PC-9 (cell line): ENCODE measurements at regions of chrX and their contacts with region 1.

Region 1: DNA sequence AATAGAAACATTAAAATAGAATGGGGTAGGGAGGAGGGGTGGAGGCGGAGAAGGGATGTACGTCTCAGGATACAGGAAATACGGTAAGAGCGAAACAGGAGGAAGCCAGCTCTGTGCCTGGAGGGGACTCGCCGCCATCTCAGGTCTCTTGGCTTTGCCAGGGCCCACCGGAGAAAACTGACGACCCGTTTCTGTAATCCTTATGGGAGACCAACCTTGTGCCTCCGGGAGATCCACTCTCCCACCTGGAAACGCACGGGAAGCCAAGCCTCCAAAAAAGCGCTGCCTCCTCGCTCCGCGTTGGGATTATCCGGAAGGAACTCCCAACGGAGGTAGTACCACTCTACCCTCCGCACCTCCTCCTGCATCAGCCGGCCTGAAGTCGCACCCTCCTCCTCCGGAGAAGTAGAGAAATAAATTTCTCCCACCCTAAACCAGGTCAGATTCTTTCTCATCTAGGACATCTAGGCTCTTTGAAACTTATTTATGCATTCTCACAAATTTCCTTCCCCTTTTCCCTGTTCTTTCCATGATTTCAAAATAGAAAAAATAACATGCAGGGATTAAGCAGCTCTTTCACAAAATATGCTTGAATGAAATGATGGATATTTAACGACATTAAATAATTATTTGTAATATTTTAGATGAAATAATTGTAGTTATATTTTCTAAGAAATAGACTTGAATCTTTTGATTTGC is at the start of gene NBDY:
- DNase-seq: peak in 1 of 2 experiments; percentile 59
- H3K4me3 ChIP-seq: peak within 1 kb of the TSS; percentile 66
- H3K27ac ChIP-seq: peak within 1 kb of the TSS; percentile 43; the same call in 1 of the 2 replicates
- H3K4me1 ChIP-seq: no peaks in the 10 kb centered on the region
- H3K27me3 ChIP-seq: no peaks in the 10 kb centered on the region
- CTCF ChIP-seq: no peak
- total RNA-seq, gene NBDY: 76.6 and 99.3 TPM in 2 replicates

Region 2: DNA sequence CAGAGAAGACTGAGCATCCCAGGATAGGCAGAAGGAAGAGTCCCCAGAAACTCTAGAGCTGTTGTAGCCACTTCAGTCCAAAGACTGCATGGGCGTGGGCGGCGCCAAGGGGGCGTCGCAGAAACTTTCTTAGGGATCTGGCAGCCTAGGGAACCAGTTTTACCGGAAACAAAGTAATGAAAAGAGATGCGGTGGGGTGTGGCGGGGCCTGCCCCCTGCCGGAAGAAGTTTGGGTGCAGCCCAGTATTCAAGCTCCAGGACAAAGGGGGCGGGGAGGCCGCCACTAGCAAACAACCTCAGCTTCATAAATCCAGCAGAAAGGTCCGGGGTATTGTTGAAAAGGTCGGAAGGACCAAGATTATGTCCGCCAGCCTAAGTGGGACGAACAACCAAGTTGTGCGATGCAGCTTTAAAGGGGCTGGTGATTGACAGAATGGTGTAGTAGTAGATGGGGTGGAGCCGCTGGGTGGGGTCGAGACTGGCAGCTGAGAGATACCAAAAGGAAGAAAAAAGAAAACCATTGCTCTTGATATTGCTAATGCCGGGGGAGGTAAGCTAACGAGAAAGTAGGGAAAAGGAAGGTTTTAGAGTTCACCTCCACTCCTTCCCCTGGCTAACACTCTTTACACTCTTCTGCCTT is 821.2 kb before region 1 on chrX:
- CTCF ChIA-PET with region 1: no interaction called
- POLR2A ChIA-PET with region 1: no interaction called
- intact Hi-C with region 1: loop called (anchors 10 kb)
- DNase-seq: peak; percentile 72 to 78
- H3K4me3 ChIP-seq: peak overlapping the region; percentile 84
- H3K27ac ChIP-seq: peak overlapping the region; percentile 69
- H3K4me1 ChIP-seq: peaks cover 14% of the 10 kb centered on the region
- H3K27me3 ChIP-seq: no peaks in the 10 kb centered on the region
- CTCF ChIP-seq: peak; percentile 69

Region 3: GRCh38 chrX:56232221-56233082 is 496.8 kb before region 1 on chrX and contains the start of gene KLF8:
- CTCF ChIA-PET with region 1: interaction called, 4 read pairs
- POLR2A ChIA-PET with region 1: interaction called, 6 read pairs
- intact Hi-C with region 1: loop called (anchors 2 kb)
- DNase-seq: peak; percentile 62 to 84
- H3K4me3 ChIP-seq: peak within 1 kb of the TSS; percentile 83
- H3K27ac ChIP-seq: peak within 1 kb of the TSS; percentile 53; the same call in 1 of the 2 replicates
- H3K4me1 ChIP-seq: peaks cover 37% of the 10 kb centered on the region
- H3K27me3 ChIP-seq: no peaks in the 10 kb centered on the region
- CTCF ChIP-seq: no peak
- total RNA-seq, gene KLF8: 92.7 and 93.2 TPM in 2 replicates

Region 4: DNA sequence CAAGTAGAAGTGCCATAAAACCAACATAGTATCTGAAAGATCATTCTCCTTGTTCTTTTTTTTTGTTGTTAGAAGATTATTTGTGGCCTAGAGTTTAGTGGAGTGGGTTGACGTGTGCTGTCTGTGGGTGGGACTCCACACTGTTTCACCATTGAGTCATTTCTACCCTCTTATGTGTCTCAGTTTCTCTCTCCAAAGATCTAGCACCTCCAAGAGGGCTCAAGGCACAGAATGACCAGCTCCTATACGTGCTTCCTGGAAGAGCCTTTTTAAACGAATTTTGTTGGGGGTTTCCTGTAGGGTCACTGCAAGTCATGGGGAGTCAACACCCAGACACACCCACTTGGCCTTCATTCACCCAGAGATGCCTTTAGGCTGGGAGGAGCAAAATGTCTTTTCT is 347.0 kb before region 1 on chrX:
- CTCF ChIA-PET with region 1: no interaction called
- POLR2A ChIA-PET with region 1: no interaction called
- intact Hi-C with region 1: loop called (anchors 10 kb)
- DNase-seq: no peak
- H3K4me3 ChIP-seq: no peak overlapping the region
- H3K27ac ChIP-seq: no peak overlapping the region
- H3K4me1 ChIP-seq: no peaks in the 10 kb centered on the region
- H3K27me3 ChIP-seq: no peaks in the 10 kb centered on the region
- CTCF ChIP-seq: no peak

Region 5: DNA sequence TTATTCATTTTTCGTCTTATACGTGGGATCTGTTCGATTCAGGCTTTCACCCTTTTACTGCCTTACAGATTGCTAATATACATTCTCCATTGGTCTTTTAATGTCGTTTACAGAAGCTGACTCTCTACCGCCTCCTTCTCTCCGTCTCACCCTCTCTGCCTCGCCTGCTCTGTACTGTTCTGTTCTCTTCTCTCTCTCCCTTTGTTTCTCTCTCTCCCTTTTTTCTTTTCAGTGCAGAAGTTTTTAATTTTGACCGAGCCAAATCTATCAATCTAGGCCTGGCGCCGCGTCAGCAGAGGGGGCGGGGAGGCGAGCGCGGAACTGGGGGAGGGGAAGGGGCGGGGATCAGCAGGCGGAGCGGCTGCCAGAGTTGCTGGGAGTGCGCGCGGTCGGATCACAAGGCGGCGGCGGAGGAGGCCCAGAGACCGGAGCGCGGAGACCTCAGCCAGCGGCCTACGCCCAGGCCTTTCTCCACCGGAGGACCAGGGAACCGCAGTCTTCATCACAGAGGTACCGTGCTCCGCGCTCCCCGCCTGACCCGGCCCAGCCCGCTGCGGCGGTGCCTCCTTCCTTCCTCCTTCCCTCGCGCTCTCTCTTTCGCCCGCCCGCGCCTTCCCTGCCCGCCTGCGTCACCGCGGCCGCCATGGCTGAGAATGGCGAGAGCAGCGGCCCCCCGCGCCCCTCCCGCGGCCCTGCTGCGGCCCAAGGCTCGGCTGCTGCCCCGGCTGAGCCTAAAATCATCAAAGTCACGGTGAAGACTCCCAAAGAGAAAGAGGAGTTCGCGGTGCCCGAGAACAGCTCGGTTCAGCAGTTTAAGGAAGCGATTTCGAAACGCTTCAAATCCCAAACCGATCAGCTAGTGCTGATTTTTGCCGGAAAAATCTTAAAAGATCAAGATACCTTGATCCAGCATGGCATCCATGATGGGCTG is 165.8 kb before region 1 on chrX and contains the start of gene UBQLN2:
- CTCF ChIA-PET with region 1: no interaction called
- POLR2A ChIA-PET with region 1: no interaction called
- intact Hi-C with region 1: loop called (anchors 5 kb)
- DNase-seq: peak; percentile 49 to 87
- H3K4me3 ChIP-seq: peak within 1 kb of the TSS; percentile 95
- H3K27ac ChIP-seq: peak within 1 kb of the TSS; percentile 93
- H3K4me1 ChIP-seq: peaks cover 9% of the 10 kb centered on the region; the same call in 1 of the 2 replicates
- H3K27me3 ChIP-seq: no peaks in the 10 kb centered on the region
- CTCF ChIP-seq: peak; percentile 29; the same call in 1 of the 2 replicates
- total RNA-seq, gene UBQLN2: 53.5 and 78.7 TPM in 2 replicates